Thyroid gland (tissue), 4 donors: ENCODE measurements at regions of chr3 and their contacts with region 1.

Region 1: DNA sequence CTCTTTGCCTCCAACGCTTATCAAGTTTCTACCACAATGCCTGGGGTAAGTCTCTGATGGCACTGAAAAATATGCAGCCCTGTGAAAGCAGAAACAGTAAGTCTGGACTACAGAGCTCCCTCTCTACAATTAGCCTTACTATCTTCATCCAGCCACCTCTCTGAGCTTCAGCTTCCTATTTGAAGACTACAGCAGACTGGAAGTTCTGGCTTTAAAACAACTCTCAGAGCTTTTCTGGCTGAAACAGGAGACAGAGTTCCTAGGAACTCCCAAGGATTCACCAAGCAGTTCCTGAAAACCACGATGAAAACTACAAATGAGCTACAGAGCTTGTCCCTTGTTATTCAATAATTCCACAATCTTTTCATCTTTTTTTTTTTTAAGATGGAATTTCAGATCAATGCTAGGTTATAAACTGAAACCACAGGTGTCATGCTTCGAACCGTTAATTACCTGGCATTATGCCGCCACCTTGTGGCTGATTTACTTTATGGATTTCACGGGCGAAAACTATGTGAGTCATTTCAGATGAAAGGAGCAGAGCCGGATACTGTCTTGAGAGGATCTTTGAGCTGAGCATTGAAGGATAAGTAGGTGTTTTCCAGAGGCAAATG is 3.9 kb downstream of the CRYGS start:
- DNase-seq: peak; percentile 83 to 87
- H3K4me3 ChIP-seq: no peak overlapping the region
- H3K27ac ChIP-seq: no peak overlapping the region
- H3K4me1 ChIP-seq: peaks cover 3 to 9% of the 10 kb centered on the region in 2 donors
- H3K27me3 ChIP-seq: no peaks in the 10 kb centered on the region
- CTCF ChIP-seq: peak; percentile 17 to 94 (median 70)
- POLR2A ChIP-seq: no peak

Region 2: GRCh38 chr3:185983495-185984141 is 556.7 kb before region 1 on chr3:
- intact Hi-C with region 1: loop called (anchors 5 kb)
- DNase-seq: peak; percentile 66 to 68
- H3K4me3 ChIP-seq: no peak overlapping the region
- H3K27ac ChIP-seq: no peak overlapping the region
- H3K4me1 ChIP-seq: peaks cover 3 to 13% of the 10 kb centered on the region in 2 donors
- H3K27me3 ChIP-seq: no peaks in the 10 kb centered on the region
- CTCF ChIP-seq: peak; percentile 62 to 90 (median 86)
- POLR2A ChIP-seq: no peak

Region 3: DNA sequence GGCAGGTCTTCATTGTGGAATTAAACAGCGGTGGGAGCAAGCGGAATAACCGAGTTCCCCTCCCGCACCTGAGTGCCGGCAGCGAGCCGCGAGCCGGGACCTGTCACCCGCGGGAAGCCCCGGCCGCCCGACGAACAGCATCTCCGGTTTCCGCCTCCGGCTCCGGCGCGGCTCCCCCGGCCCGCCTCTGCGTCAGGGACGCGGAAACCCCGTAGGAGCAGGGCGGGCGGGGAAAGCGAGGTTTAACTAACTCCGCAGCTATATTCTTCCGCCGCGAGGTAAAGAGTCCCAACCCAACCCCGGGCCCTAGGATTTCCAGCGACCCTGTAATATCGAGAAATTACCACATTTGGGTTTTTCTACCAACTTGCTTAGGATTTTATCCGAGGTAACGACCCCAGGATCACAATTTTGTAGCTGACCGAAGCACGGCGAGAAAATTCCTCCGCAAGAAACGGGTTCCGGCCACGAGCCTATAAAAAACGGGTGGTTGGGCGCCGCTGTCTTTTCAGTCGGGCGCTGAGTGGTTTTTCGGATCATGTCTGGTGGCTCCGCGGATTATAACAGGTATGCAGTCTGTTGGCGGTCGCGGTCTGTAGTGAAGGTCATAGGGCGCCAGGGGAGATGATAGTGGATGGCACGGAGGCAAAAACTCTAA is 242.9 kb after region 1 on chr3 and contains the start of gene EIF4A2:
- intact Hi-C with region 1: no loop called
- DNase-seq: peak; percentile 91
- H3K4me3 ChIP-seq: peak within 1 kb of the TSS; percentile 55 to 99 (median 89)
- H3K27ac ChIP-seq: peak within 1 kb of the TSS; percentile 96 to 100 (median 99)
- H3K4me1 ChIP-seq: peaks cover 33 to 35% of the 10 kb centered on the region in 2 donors
- H3K27me3 ChIP-seq: no peaks in the 10 kb centered on the region
- CTCF ChIP-seq: no peak
- POLR2A ChIP-seq: peak; percentile 85 to 88
- total RNA-seq, gene EIF4A2: 356 to 655 (median 412) TPM